HAP-1 (cell line): ENCODE measurements at regions of chr2 and their contacts with region 1.

Region 1: GRCh38 chr2:44479122-44479887 is 117.6 kb downstream of the CAMKMT start:
- DNase-seq: peak; percentile 65 to 94
- H3K4me3 ChIP-seq: no peak overlapping the region
- H3K4me1 ChIP-seq: peaks cover 4% of the 10 kb centered on the region
- H3K27me3 ChIP-seq: no peaks in the 10 kb centered on the region

Region 2: DNA sequence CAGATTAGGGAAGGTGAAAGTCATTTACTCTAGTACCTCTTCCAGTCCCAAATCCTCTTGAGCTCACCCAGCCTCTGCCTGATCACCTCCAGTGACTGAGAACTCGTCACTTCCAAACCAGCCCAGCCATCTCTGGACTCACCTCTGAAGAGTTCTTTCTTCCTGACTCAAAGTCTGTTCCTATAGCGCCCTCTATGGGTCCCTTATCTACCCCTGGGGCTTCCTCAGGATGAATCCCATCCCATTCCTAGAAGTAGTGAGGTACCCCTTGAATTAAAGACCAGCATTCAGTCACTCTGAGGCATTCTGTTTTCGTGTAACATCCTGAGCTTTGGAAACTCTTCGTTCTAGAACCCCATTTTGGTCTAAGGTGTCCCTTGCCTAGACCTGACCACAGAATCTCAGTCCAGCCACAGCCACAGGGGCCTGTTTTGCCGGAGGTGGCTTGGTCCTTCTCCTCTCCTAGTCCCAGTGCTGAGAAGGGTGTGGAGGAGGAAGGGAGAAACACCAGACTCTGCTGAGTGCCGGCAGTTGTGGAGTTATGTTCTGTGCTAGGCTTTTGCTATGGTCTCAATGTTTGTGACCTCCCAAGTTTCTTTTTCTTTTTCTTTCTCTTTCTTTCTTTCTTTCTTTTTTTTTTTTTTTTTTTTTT is 494.9 kb after region 1 on chr2:
- in situ Hi-C with region 1: loop called (anchors 10 kb)
- DNase-seq: peak; percentile 61 to 82
- H3K4me3 ChIP-seq: no peak overlapping the region
- H3K4me1 ChIP-seq: peaks cover 9% of the 10 kb centered on the region
- H3K27me3 ChIP-seq: peaks cover 3% of the 10 kb centered on the region; the same call in 1 of the 2 replicates